Upper lobe of right lung (tissue), 1 donor: ENCODE measurements at regions of chr1 and their contacts with region 1.

Region 1: DNA sequence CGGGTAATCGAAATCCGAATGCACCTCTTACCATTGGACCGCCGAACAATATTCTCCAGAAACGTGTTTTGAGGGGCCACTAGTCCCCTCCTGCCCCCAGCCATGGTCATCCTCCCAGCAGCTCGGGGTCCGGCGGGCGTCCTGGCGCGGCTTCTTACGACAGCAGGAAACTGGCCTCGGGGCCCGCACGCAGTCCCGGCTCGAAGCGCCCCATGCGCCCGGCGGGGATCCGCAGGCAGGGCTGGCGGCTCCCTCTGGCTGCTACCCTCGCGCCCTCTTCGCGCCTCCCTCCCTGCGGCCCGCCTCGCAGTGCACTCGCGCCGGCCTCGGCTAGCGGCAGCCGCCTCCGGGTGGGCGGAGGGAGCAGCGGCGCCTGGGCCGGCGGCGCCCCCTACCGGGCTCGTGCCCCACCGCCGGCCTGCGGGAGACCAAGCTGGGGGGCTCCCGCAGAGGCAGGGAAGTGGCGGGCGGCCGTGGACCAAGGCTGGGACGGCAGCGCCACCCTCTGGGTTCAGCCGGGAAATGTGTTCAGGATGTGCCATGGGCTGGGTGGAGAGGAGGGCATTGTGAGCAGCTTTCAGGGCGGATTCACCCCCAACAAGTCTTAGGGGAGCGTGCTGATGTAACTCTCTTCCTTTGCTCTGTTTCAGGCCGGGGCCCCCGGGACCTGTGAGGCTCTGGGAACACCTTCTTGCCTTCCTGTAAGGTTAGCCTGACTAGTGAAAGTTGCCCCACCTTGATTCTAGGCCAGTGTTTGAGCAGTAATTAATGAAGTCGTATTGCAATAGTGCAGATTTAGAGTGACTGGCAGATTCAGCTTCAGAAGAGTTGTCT is at the start of gene KCNH1:
- DNase-seq: peak; percentile 77
- ATAC-seq: peak; percentile 97
- H3K4me3 ChIP-seq: peak within 1 kb of the TSS; percentile 43
- H3K27ac ChIP-seq: no peak within 1 kb of the TSS
- H3K4me1 ChIP-seq: peaks cover 13% of the 10 kb centered on the region
- H3K27me3 ChIP-seq: peaks cover 51% of the 10 kb centered on the region
- CTCF ChIP-seq: peak; percentile 73
- total RNA-seq, gene KCNH1: not detected

Region 2: DNA sequence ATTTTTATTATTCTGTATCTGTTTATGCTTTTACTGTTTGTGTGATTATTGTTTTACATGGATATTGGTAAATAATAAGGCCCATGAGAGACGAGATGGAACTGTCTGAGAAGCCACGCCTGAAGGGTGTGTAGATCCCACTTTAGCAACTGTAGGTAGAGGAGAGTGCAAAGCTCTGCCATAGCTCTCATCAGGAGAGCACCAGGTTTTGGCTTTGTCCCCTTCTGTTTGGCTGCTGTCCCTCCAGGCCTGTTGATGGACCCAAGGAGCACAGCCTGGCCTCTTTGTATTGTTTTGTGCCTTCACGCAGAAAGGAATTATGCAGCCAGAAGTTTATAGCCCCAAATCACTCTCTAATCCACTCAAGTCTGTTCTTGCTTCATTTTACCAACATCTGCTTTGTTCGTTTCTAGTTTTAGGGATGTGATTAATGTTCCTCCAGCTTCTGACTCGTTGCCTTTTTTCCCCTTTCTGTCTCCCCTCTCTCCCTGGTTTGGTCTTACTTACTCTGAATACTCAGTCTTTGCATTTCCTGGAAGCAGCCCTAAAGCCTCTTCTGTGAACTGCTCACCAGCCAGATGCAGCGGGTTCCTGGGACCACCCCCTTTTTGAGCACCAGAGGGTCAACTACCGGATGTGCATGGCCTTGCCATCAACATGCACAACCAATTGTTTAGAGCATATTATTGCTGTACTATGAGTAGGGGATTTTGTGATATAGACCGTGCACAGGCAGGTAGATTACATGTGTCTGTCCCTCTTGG is 678.0 kb before region 1 on chr1:
- intact Hi-C with region 1: loop called (anchors 10 kb)
- DNase-seq: no peak
- ATAC-seq: no peak
- H3K4me3 ChIP-seq: no peak overlapping the region
- H3K27ac ChIP-seq: no peak overlapping the region
- H3K4me1 ChIP-seq: no peaks in the 10 kb centered on the region
- H3K27me3 ChIP-seq: no peaks in the 10 kb centered on the region
- CTCF ChIP-seq: no peak